Activated T-helper 2 cell treated with anti-CD3 and anti-CD28 coated beads, Interferon-gamma antibody, Interleukin-2, Interleukin-4, amounts not matched to agents 10 μg/mL and 5 μg/mL and 100 μg/mL, durations not matched to agents 14 hours and 24 hours and 36 hours (primary cell): ENCODE measurements at regions of chr2 and their contacts with region 1.

Region 1: GRCh38 chr2:218301176-218301819 is 9.0 kb upstream of the TMBIM1 start:
- DNase-seq: peak; percentile 80
- H3K4me3 Mint-ChIP-seq: no peak overlapping the region
- H3K27ac Mint-ChIP-seq: peak overlapping the region; percentile 33
- H3K4me1 Mint-ChIP-seq: peaks cover 5% of the 10 kb centered on the region
- H3K27me3 Mint-ChIP-seq: no peaks in the 10 kb centered on the region

Region 2: DNA sequence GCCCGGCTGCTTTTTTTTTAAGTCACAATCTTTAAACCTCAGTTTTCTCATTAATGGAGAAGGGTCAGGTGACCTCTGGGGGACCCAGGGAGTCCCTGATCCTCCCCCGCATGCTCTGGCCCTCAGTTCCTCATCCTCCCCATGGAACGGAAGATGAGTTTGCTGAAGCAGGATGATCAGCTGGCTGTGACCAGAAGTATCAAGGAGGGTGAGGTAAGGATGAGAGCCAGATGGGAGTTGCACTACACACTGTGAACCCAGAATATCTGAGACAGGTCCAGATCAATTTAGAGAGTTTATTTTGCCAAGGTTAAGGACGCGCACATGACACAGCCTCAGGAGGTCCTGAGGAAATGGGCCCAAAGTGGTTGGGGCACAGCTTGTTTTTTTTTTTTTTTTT is 59.1 kb after region 1 on chr2:
- intact Hi-C with region 1: loop called (anchors 1 kb)
- DNase-seq: no peak
- H3K4me3 Mint-ChIP-seq: no peak overlapping the region
- H3K27ac Mint-ChIP-seq: no peak overlapping the region
- H3K4me1 Mint-ChIP-seq: no peaks in the 10 kb centered on the region
- H3K27me3 Mint-ChIP-seq: peaks cover 1% of the 10 kb centered on the region

Region 3: GRCh38 chr2:218648088-218648786 is 346.9 kb after region 1 on chr2:
- intact Hi-C with region 1: loop called (anchors 1 kb)
- DNase-seq: peak; percentile 39
- H3K4me3 Mint-ChIP-seq: no peak overlapping the region
- H3K27ac Mint-ChIP-seq: no peak overlapping the region
- H3K4me1 Mint-ChIP-seq: peaks cover 4% of the 10 kb centered on the region
- H3K27me3 Mint-ChIP-seq: no peaks in the 10 kb centered on the region